Activated CD4-positive, alpha-beta memory T cell treated with anti-CD3 and anti-CD28 coated beads, Interleukin-2, amount 10 ng/mL, durations not matched to agents 7 days and 5 days (primary cell): ENCODE measurements at regions of chrX and their contacts with region 1.

Region 1: GRCh38 chrX:107627838-107628661 is at the start of gene PRPS1:
- DNase-seq: peak; percentile 91
- H3K4me3 Mint-ChIP-seq: peak within 1 kb of the TSS; percentile 94
- H3K27ac Mint-ChIP-seq: peak within 1 kb of the TSS; percentile 84
- H3K4me1 Mint-ChIP-seq: peaks cover 32% of the 10 kb centered on the region
- H3K27me3 Mint-ChIP-seq: peaks cover under 1% of the 10 kb centered on the region
- total RNA-seq, gene PRPS1: 67.4 to 70.2 TPM

Region 2: GRCh38 chrX:107672955-107673378 is 44.9 kb after region 1 on chrX:
- CTCF ChIA-PET with region 1: interaction called, 11 read pairs
- POLR2A ChIA-PET with region 1: interaction called, 13 read pairs
- DNase-seq: peak; percentile 85
- H3K4me3 Mint-ChIP-seq: peak overlapping the region; percentile 41
- H3K27ac Mint-ChIP-seq: peak overlapping the region; percentile 93
- H3K4me1 Mint-ChIP-seq: peaks cover 48% of the 10 kb centered on the region
- H3K27me3 Mint-ChIP-seq: no peaks in the 10 kb centered on the region

Region 3: GRCh38 chrX:107710617-107711391 is 82.8 kb after region 1 on chrX:
- CTCF ChIA-PET with region 1: interaction called, 3 read pairs
- POLR2A ChIA-PET with region 1: interaction called, 37 read pairs
- DNase-seq: peak; percentile 54
- H3K4me3 Mint-ChIP-seq: peak overlapping the region; percentile 37
- H3K27ac Mint-ChIP-seq: peak overlapping the region; percentile 90
- H3K4me1 Mint-ChIP-seq: peaks cover 50% of the 10 kb centered on the region
- H3K27me3 Mint-ChIP-seq: no peaks in the 10 kb centered on the region

Region 4: DNA sequence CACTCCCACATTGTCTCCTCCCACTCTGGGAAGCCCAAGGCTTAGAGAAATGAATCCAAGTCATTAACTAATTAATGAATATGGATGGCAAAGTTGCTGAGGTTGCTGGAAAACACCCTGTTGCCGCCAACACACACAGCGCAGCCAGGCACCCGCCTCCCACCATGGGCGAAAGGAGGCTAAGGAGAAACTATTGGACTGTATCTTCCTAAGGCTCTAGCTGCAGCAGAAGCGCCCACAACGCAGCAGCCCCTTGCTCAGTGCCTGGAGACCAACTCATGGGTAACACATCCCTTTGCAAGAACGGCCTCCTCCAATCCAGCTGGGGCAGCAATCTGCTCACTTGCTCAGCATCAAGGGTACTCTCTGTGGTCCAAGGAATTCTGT is 113.3 kb after region 1 on chrX:
- CTCF ChIA-PET with region 1: interaction called, 3 read pairs
- POLR2A ChIA-PET with region 1: interaction called, 18 read pairs
- DNase-seq: no peak
- H3K4me3 Mint-ChIP-seq: peak overlapping the region; percentile 72
- H3K27ac Mint-ChIP-seq: peak overlapping the region; percentile 93
- H3K4me1 Mint-ChIP-seq: peaks cover 16% of the 10 kb centered on the region
- H3K27me3 Mint-ChIP-seq: no peaks in the 10 kb centered on the region

Region 5: GRCh38 chrX:107787827-107788226 is 159.8 kb after region 1 on chrX:
- CTCF ChIA-PET with region 1: no interaction called
- POLR2A ChIA-PET with region 1: no interaction called
- DNase-seq: no peak
- H3K4me3 Mint-ChIP-seq: no peak overlapping the region
- H3K27ac Mint-ChIP-seq: no peak overlapping the region
- H3K4me1 Mint-ChIP-seq: no peaks in the 10 kb centered on the region
- H3K27me3 Mint-ChIP-seq: peaks cover 9% of the 10 kb centered on the region

Region 6: DNA sequence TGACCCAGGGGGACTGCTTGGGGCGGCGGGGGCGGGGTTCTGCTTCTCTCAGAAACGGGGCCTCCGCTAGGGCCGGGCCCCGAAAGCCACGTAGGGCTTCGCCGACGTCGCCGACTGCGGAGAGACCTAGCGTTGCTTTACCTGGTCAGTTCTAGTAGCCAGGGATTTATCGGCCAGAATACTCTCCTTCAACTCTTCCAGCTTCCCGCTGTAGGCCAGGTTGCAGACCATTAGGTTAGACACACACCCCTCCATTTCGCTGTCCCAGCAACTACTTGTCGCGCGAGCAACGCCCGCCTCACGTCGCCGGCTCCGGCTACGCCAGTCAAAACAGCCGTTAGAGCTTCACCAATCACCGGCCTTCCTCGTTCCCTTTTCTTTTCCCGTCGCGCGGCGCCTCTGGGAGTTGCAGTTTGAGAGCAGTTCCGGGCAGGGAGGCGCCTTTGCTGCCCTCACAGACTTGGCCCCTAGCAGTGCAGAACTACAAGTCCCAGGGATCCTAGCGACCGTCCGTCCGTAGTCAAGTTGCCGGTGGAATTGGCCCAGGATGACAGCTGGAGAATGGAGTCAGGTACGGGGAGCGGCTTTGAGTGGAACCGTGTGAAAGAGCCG is 463.3 kb after region 1 on chrX and contains the starts of genes ATG4A and PSMD10:
- CTCF ChIA-PET with region 1: no interaction called
- POLR2A ChIA-PET with region 1: interaction called, 16 read pairs
- DNase-seq: peak; percentile 93
- H3K4me3 Mint-ChIP-seq: no peak within 1 kb of the TSS
- H3K27ac Mint-ChIP-seq: no peak within 1 kb of the TSS
- H3K4me1 Mint-ChIP-seq: peaks cover 30% of the 10 kb centered on the region
- H3K27me3 Mint-ChIP-seq: no peaks in the 10 kb centered on the region
- total RNA-seq, gene ATG4A: 12.5 to 12.7 TPM
- total RNA-seq, gene PSMD10: 36.1 to 37.3 TPM